Activated B cell treated with CpG ODN at 0.5 μM for 24 hours (primary cell): ENCODE measurements at regions of chr14 and their contacts with region 1.

Region 1: DNA sequence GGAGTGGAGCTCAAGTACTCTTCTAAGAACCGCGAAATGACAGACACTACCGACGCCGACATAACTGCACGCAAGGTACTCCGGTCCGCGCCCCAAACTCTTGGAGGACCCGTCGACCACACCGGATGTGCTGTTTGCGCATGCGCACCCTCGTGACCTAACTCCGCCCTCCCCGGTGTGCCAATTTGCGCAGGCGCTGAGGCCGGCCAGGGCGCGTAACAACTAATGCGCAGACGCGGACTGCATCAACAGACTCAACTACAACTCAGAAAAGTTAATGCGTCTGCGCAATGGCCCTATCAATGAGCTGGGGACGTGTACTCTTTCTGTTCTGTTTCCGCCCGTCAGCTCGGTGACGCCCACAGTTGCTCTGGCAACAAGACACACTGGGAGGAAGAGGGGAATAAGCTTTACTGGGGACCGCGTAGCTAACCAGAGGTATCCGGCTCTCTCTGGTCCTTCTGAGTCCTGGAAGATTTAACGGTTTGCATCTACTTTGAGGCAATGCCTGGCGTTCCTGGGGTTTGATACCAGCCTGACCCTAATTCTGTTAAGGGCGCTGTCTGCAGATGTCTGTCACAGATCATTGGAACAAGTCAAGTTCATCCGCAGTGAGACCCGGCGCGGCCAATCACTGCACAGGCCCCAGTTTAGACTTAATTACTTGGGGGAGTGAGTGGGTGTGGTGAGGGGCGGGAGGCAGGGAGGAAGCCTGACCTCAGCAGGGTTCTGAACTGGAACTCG is at the start of gene DAD1:
- DNase-seq: peak; percentile 99
- ATAC-seq: peak; percentile 88
- H3K4me3 Mint-ChIP-seq: peak within 1 kb of the TSS; percentile 99
- H3K27ac Mint-ChIP-seq: peak within 1 kb of the TSS; percentile 100
- H3K4me1 Mint-ChIP-seq: peaks cover 57% of the 10 kb centered on the region
- H3K27me3 Mint-ChIP-seq: peaks cover 2% of the 10 kb centered on the region
- CTCF ChIP-seq: no peak
- total RNA-seq, gene DAD1: 123 and 139 TPM in 2 replicates

Region 2: GRCh38 chr14:21308479-21309237 is 1280.6 kb before region 1 on chr14:
- CTCF ChIA-PET with region 1: no interaction called
- POLR2A ChIA-PET with region 1: no interaction called
- intact Hi-C with region 1: loop called (anchors 10 kb)
- DNase-seq: peak; percentile 51
- ATAC-seq: peak; percentile 85
- H3K4me3 Mint-ChIP-seq: peak overlapping the region; percentile 87
- H3K27ac Mint-ChIP-seq: peak overlapping the region; percentile 93
- H3K4me1 Mint-ChIP-seq: peaks cover 26% of the 10 kb centered on the region
- H3K27me3 Mint-ChIP-seq: no peaks in the 10 kb centered on the region
- CTCF ChIP-seq: no peak

Region 3: DNA sequence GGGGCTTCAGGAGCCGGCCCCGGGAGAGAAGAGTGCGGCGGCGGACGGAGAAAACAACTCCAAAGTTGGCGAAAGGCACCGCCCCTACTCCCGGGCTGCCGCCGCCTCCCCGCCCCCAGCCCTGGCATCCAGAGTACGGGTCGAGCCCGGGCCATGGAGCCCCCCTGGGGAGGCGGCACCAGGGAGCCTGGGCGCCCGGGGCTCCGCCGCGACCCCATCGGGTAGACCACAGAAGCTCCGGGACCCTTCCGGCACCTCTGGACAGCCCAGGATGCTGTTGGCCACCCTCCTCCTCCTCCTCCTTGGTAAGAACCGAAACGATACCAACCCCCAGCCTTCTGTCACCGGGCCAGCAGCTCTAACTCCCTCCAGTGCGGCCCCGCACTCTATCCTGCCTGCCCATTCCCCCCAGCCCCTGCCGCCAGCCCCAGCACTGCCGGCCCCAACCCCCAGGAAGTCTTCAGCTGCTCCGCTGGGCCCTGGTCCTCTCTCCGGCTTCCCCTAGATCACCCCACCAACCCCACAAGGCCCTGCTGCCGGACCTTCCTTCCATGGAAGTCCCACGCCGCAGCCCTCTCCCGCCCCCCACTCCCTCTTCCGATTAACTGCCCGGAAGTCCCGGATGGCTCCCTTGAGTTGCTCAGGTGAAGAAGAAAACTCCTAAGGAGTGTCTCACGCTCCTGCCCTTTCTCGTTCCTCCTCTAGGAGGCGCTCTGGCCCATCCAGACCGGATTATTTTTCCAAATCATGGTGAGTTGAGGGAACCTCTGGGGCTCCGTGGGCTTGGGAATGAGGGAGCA is 283.0 kb after region 1 on chr14:
- CTCF ChIA-PET with region 1: no interaction called
- POLR2A ChIA-PET with region 1: interaction called, 16 read pairs
- intact Hi-C with region 1: loop called (anchors 1 kb)
- DNase-seq: peak; percentile 69
- ATAC-seq: peak; percentile 22
- H3K4me3 Mint-ChIP-seq: peak overlapping the region; percentile 89
- H3K27ac Mint-ChIP-seq: peak overlapping the region; percentile 92
- H3K4me1 Mint-ChIP-seq: peaks cover 33% of the 10 kb centered on the region
- H3K27me3 Mint-ChIP-seq: no peaks in the 10 kb centered on the region
- CTCF ChIP-seq: no peak

Region 4: GRCh38 chr14:22918804-22919600 is 329.7 kb after region 1 on chr14 and contains the start of gene RBM23:
- CTCF ChIA-PET with region 1: interaction called, 4 read pairs
- POLR2A ChIA-PET with region 1: interaction called, 4 read pairs
- intact Hi-C with region 1: loop called (anchors 1 kb)
- DNase-seq: peak; percentile 94
- ATAC-seq: peak; percentile 94
- H3K4me3 Mint-ChIP-seq: peak within 1 kb of the TSS; percentile 99
- H3K27ac Mint-ChIP-seq: peak within 1 kb of the TSS; percentile 100
- H3K4me1 Mint-ChIP-seq: peaks cover 53% of the 10 kb centered on the region
- H3K27me3 Mint-ChIP-seq: no peaks in the 10 kb centered on the region
- CTCF ChIP-seq: no peak
- total RNA-seq, gene RBM23: 130 and 131 TPM in 2 replicates

Region 5: DNA sequence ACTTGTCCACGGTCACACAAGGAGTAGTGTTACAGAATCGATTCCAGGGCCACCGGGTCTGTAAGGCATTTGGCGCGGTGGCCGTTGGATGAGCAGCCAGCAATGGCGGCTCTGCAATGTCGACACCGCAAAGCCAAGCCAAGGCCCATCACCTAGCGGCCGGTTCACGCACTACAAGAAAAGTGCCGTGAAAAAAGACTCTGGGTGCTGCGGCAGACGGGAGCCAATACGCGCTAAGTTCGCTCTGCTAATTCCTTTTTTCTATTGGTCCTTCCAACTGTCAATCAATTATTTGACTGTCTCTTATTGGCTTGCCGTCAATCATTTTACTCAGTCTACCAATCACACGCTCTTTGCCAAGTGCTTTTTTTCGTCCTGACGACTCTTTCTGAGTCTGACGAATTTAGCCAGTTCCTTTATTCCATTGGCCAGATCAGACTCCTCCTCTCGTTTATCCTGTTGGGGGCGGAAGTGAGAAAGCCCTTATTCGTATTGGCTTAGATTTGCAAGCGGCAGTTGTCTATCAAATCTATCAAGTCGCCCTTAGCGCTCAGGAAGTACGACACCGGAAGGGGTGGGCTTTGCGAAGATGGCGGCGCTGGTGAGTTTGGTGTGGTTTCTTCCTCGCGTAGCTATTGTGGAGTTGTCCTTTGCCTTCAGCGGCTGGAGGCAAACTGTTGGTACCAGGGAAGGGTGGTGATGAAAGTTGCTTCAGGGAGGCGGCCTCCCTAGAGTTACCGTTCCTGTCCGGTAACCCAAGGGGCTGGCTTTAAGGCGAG is 880.0 kb after region 1 on chr14 and contains the start of gene NGDN:
- CTCF ChIA-PET with region 1: no interaction called
- POLR2A ChIA-PET with region 1: no interaction called
- intact Hi-C with region 1: loop called (anchors 2 kb)
- DNase-seq: peak; percentile 80
- ATAC-seq: peak; percentile 90
- H3K4me3 Mint-ChIP-seq: no peak within 1 kb of the TSS
- H3K27ac Mint-ChIP-seq: no peak within 1 kb of the TSS
- H3K4me1 Mint-ChIP-seq: peaks cover 11% of the 10 kb centered on the region
- H3K27me3 Mint-ChIP-seq: no peaks in the 10 kb centered on the region
- CTCF ChIP-seq: no peak
- total RNA-seq, gene NGDN: 60.5 and 67.4 TPM in 2 replicates